GM12878 (cell line): ENCODE measurements at regions of chr11 and their contacts with region 1.

Region 1: GRCh38 chr11:57240757-57241156 is 3.7 kb upstream of the APLNR start:
- DNase-seq: no peak
- ATAC-seq: no peak
- H3K4me3 ChIP-seq: no peak overlapping the region
- H3K27ac ChIP-seq: no peak overlapping the region
- H3K4me1 ChIP-seq: no peaks in the 10 kb centered on the region
- H3K27me3 ChIP-seq: peaks cover 0 to 2% of the 10 kb centered on the region in 2 experiments; a peak in 2 of 4 replicates
- CTCF ChIP-seq: no peak
- EP300 ChIP-seq: no peak
- POLR2A ChIP-seq: no peak
- RAD21 ChIP-seq: no peak

Region 2: DNA sequence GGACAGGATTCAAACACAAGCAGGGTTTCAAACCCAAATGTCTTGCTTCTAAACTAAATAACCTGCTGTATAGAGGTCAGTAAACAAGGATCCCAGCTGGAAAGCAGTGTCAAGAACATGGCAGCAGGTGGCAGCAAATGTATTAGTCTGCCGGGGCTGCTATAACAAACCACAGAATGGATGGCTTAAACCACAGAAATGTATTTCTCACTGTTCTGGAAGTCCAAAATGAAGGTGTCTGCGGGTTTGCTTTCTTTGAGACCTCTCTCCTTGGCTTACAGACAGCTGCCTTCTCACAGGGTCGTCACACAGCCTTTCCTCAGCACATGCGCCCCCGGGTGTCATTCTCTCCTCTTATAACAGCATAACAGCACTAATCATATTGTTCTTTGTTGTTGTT is 124.1 kb before region 1 on chr11:
- CTCF ChIA-PET with region 1: no interaction called
- POLR2A ChIA-PET with region 1: no interaction called
- RAD21 ChIA-PET with region 1: no interaction called
- SMC1A ChIA-PET with region 1: no interaction called
- in situ Hi-C with region 1: loop called (anchors 5 kb)
- intact Hi-C with region 1: no loop called
- DNase-seq: no peak
- ATAC-seq: peak; percentile 82
- H3K4me3 ChIP-seq: no peak overlapping the region
- H3K27ac ChIP-seq: no peak overlapping the region
- H3K4me1 ChIP-seq: no peaks in the 10 kb centered on the region
- H3K27me3 ChIP-seq: no peaks in the 10 kb centered on the region; a peak in 1 of 4 replicates
- CTCF ChIP-seq: peak; percentile 50 to 59 (median 50)
- EP300 ChIP-seq: no peak
- POLR2A ChIP-seq: no peak
- RAD21 ChIP-seq: peak; percentile 56

Region 3: GRCh38 chr11:57213342-57214095 is 27.2 kb before region 1 on chr11:
- CTCF ChIA-PET with region 1: no interaction called
- POLR2A ChIA-PET with region 1: no interaction called
- RAD21 ChIA-PET with region 1: no interaction called
- SMC1A ChIA-PET with region 1: no interaction called
- in situ Hi-C with region 1: no loop called
- intact Hi-C with region 1: no loop called
- DNase-seq: no peak
- ATAC-seq: peak; percentile 47
- H3K4me3 ChIP-seq: no peak overlapping the region
- H3K27ac ChIP-seq: no peak overlapping the region
- H3K4me1 ChIP-seq: no peaks in the 10 kb centered on the region
- H3K27me3 ChIP-seq: no peaks in the 10 kb centered on the region; a peak in 1 of 4 replicates
- CTCF ChIP-seq: no peak
- EP300 ChIP-seq: no peak
- POLR2A ChIP-seq: no peak
- RAD21 ChIP-seq: no peak